Activated CD8-positive, alpha-beta T cell treated with anti-CD3 and anti-CD28 coated beads for 36 hours (primary cell): ENCODE measurements at regions of chr12 and their contacts with region 1.

Region 1: DNA sequence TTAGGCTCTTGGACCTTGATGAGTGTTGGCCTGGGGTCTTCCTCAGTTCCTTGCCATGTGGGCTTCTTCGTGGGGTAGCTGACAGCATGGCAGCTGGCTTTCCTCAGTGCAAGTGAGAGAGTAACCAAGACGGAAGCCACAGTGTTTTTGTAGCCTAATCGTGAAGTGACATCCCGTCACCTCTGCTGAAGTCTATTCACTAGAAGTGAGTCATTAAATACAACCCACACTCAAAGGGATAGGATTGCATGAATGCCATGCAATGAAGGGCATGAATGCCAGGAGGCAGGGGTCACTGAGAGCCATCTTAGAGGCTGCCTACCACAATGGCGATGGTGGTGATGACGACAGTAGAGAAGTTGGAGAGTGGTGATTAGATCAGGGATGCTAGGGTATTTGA is 13.5 kb upstream of the ASIC1 start:
- DNase-seq: no peak
- ATAC-seq: peak; percentile 46
- H3K4me3 Mint-ChIP-seq: no peak overlapping the region
- H3K27ac Mint-ChIP-seq: no peak overlapping the region
- H3K4me1 Mint-ChIP-seq: peaks cover 20% of the 10 kb centered on the region
- H3K27me3 Mint-ChIP-seq: peaks cover 2% of the 10 kb centered on the region
- CTCF ChIP-seq: no peak

Region 2: GRCh38 chr12:50025187-50026059 is 18.4 kb before region 1 on chr12 and contains the start of gene RACGAP1:
- CTCF ChIA-PET with region 1: interaction called, 35 read pairs
- POLR2A ChIA-PET with region 1: interaction called, 11 read pairs
- intact Hi-C with region 1: no loop called
- DNase-seq: peak; percentile 97
- ATAC-seq: peak; percentile 99
- H3K4me3 Mint-ChIP-seq: peak within 1 kb of the TSS; percentile 93
- H3K27ac Mint-ChIP-seq: peak within 1 kb of the TSS; percentile 97
- H3K4me1 Mint-ChIP-seq: peaks cover 18% of the 10 kb centered on the region
- H3K27me3 Mint-ChIP-seq: no peaks in the 10 kb centered on the region
- CTCF ChIP-seq: no peak
- total RNA-seq, gene RACGAP1: 113 to 117 TPM

Region 3: DNA sequence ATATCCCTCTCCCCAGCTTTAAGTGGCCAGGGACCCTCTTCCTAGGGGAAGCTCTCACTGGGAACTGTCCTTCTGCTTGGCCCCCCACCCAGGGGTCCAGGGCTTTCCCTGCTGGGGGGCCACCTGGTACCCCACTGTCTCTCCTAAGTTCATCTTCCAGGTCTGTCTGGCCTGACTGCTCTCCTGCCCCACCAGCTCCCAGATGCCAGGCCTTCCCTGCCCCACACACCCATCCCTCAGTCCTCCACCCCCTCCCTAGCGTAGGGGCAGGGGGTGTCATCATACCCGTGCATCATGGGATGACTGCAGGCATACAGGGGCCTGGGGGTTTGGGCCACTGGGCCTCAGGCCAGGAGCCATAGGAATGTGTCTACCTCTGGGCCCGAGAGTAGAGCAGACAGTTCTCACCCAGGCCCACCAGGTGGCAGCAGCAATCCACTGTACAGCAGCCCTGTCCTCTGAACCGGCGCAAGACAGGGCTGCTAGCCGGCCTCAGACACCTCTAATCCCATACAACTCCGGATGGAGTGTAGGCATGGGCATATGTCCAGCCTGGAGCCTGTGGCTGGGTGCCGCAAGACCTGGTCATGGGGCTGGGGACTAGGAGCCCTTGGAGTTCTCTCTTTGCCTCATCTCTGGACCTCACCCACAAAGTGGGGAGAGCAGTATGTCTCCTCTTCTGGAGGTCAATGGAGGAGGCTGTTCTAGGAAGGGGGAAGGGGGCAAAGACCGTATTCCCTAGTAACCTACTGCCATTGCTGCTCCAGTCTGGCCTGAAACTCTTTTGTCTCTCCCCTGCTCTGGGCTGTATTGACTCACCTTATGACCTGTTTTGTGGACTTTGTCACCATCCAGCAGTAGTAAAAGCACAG is 31.3 kb after region 1 on chr12:
- CTCF ChIA-PET with region 1: interaction called, 299 read pairs
- POLR2A ChIA-PET with region 1: no interaction called
- intact Hi-C with region 1: loop called (anchors 1 kb)
- DNase-seq: peak; percentile 86
- ATAC-seq: peak; percentile 99
- H3K4me3 Mint-ChIP-seq: no peak overlapping the region
- H3K27ac Mint-ChIP-seq: no peak overlapping the region
- H3K4me1 Mint-ChIP-seq: peaks cover 4% of the 10 kb centered on the region
- H3K27me3 Mint-ChIP-seq: no peaks in the 10 kb centered on the region
- CTCF ChIP-seq: peak; percentile 91